ENCODE measurements at regions of chr7 and their contacts with region 1.

Region 1: GRCh38 chr7:87564289-87564963 is 36.3 kb downstream of the ABCB1 start:
- DNase-seq: peak; percentile 39
- ATAC-seq: peak; percentile 69
- H3K4me3 Mint-ChIP-seq: no peak overlapping the region
- H3K27ac Mint-ChIP-seq: no peak overlapping the region
- H3K4me1 Mint-ChIP-seq: peaks cover 8% of the 10 kb centered on the region
- H3K27me3 Mint-ChIP-seq: no peaks in the 10 kb centered on the region

Region 2: GRCh38 chr7:87173471-87173870 is 391.0 kb before region 1 on chr7:
- CTCF ChIA-PET with region 1: no interaction called
- POLR2A ChIA-PET with region 1: no interaction called
- DNase-seq: no peak
- ATAC-seq: no peak
- H3K4me3 Mint-ChIP-seq: no peak overlapping the region
- H3K27ac Mint-ChIP-seq: no peak overlapping the region
- H3K4me1 Mint-ChIP-seq: no peaks in the 10 kb centered on the region
- H3K27me3 Mint-ChIP-seq: no peaks in the 10 kb centered on the region

Region 3: DNA sequence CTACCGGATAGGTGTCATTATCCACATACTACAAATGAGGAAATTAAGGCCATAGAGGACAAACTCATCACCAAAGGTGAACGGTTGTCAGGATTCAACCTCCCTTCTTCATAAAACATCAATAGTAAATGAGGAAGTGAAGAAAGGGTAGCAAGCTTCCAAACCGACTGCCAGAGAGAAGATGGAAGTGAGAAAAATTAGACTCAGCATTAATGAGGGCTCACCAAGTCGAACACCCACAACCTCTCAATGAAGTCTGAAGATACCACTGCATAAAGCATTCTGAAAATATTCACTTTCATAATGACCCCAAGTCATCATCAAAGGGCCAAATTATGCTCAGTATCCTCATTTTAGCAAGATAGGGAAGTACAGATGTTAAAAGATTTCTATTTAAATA is 118.5 kb before region 1 on chr7:
- CTCF ChIA-PET with region 1: no interaction called
- POLR2A ChIA-PET with region 1: no interaction called
- DNase-seq: no peak
- ATAC-seq: no peak
- H3K4me3 Mint-ChIP-seq: no peak overlapping the region
- H3K27ac Mint-ChIP-seq: no peak overlapping the region
- H3K4me1 Mint-ChIP-seq: peaks cover 2% of the 10 kb centered on the region
- H3K27me3 Mint-ChIP-seq: peaks cover 10% of the 10 kb centered on the region

Region 4: DNA sequence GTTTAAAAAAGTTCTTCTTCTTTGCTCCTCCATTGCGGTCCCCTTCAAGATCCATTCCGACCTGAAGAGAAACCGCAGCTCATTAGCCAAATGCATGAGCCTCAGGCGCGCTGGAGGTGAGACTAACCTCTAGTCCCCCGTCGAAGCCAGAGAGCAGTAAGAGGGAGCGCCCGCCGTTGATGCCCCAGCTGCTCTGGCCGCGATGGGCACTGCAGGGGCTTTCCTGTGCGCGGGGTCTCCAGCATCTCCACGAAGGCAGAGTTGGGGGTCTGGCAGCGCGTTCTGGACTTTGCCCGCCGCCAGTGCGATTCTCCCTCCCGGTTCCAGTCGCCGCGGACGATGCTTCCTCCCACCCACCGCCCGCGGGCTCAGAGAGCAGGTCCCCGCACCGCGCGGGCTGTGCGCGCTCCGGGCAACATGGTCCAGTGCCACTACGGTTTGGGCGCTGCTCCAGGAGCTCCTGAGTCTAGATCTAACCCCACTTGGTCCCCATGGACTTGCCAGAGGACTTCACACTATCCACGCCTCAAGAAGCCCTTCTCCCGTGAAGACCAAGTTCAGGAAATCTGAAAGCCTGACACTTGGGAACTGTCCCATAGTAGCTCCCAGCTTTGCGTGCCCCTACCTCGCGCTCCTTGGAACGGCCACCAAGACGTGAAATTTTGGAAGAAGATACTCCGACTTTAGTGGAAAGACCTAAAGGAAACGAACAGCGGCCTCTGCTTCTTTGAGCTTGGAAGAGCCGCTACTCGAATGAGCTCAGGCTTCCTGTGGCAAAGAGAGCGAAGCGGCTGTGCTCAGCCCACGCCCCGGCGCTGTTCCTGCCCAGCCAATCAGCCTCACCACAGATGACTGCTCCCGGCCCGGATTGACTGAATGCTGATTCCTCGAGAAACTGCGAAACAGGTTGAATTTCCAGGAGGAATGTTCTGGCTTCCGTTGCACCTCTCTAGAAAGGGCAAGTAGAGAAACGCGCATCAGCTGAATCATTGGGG is 36.0 kb after region 1 on chr7 and contains the start of gene ABCB1:
- CTCF ChIA-PET with region 1: interaction called, 15 read pairs
- POLR2A ChIA-PET with region 1: no interaction called
- DNase-seq: peak; percentile 60
- ATAC-seq: peak; percentile 92
- H3K4me3 Mint-ChIP-seq: peak within 1 kb of the TSS; percentile 82
- H3K27ac Mint-ChIP-seq: peak within 1 kb of the TSS; percentile 41
- H3K4me1 Mint-ChIP-seq: peaks cover 31% of the 10 kb centered on the region
- H3K27me3 Mint-ChIP-seq: peaks cover 18% of the 10 kb centered on the region
- total RNA-seq, gene ABCB1: 2.8 to 4.8 TPM